Activated T-helper 2 cell treated with anti-CD3 and anti-CD28 coated beads, Interferon-gamma antibody, Interleukin-2, Interleukin-4, amounts not matched to agents 10 μg/mL and 5 μg/mL and 100 μg/mL, durations not matched to agents 14 hours and 24 hours and 36 hours (primary cell): ENCODE measurements at regions of chr16 and their contacts with region 1.

Region 1: GRCh38 chr16:66872943-66873684 is 7.2 kb upstream of the PDP2 start:
- DNase-seq: peak; percentile 93
- H3K4me3 Mint-ChIP-seq: peak overlapping the region; percentile 82
- H3K27ac Mint-ChIP-seq: peak overlapping the region; percentile 92
- H3K4me1 Mint-ChIP-seq: peaks cover 43% of the 10 kb centered on the region
- H3K27me3 Mint-ChIP-seq: no peaks in the 10 kb centered on the region

Region 2: DNA sequence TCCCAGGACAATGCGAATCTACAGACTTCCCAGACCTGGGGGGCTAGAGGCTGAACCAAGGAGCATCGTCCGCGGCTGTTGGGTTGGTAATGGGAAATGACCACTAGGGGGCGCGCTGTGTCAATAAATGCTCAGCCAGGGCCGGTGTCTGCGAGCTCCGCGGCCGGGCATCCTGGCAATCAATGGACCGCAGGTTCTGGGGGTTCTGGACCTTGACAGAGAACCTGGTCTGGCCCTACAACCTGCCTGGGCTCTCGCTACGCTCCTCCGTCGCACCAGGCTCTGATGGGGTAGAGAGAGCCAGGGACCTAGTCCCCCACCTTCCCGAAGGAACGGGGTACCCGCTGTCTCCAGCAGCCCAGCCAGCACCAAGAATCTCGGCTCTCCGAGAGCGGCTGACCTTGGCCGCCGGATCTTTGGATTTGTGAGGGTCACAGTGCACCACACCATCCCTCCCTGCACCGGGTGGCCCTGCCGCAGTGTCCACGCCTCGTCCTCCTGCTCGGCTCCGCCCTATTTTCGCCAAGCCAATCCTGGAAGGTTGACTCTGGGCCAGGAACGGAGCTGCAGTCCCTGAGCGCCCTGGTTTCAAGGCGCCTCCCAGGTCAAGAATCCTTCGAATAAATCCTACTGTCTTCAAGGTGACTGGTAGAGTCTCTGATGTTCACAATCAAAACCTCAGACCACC is 466.4 kb before region 1 on chr16:
- intact Hi-C with region 1: loop called (anchors 5 kb)
- DNase-seq: peak; percentile 78
- H3K4me3 Mint-ChIP-seq: peak overlapping the region; percentile 80
- H3K27ac Mint-ChIP-seq: peak overlapping the region; percentile 38
- H3K4me1 Mint-ChIP-seq: peaks cover 17% of the 10 kb centered on the region
- H3K27me3 Mint-ChIP-seq: peaks cover 14% of the 10 kb centered on the region

Region 3: GRCh38 chr16:66608241-66609138 is 264.6 kb before region 1 on chr16:
- intact Hi-C with region 1: loop called (anchors 5 kb)
- DNase-seq: peak; percentile 72
- H3K4me3 Mint-ChIP-seq: peak overlapping the region; percentile 57
- H3K27ac Mint-ChIP-seq: peak overlapping the region; percentile 68
- H3K4me1 Mint-ChIP-seq: peaks cover 27% of the 10 kb centered on the region
- H3K27me3 Mint-ChIP-seq: no peaks in the 10 kb centered on the region

Region 4: GRCh38 chr16:66740010-66740409 is 133.1 kb before region 1 on chr16:
- intact Hi-C with region 1: loop called (anchors 5 kb)
- DNase-seq: no peak
- H3K4me3 Mint-ChIP-seq: no peak overlapping the region
- H3K27ac Mint-ChIP-seq: no peak overlapping the region
- H3K4me1 Mint-ChIP-seq: peaks cover 13% of the 10 kb centered on the region
- H3K27me3 Mint-ChIP-seq: no peaks in the 10 kb centered on the region

Region 5: DNA sequence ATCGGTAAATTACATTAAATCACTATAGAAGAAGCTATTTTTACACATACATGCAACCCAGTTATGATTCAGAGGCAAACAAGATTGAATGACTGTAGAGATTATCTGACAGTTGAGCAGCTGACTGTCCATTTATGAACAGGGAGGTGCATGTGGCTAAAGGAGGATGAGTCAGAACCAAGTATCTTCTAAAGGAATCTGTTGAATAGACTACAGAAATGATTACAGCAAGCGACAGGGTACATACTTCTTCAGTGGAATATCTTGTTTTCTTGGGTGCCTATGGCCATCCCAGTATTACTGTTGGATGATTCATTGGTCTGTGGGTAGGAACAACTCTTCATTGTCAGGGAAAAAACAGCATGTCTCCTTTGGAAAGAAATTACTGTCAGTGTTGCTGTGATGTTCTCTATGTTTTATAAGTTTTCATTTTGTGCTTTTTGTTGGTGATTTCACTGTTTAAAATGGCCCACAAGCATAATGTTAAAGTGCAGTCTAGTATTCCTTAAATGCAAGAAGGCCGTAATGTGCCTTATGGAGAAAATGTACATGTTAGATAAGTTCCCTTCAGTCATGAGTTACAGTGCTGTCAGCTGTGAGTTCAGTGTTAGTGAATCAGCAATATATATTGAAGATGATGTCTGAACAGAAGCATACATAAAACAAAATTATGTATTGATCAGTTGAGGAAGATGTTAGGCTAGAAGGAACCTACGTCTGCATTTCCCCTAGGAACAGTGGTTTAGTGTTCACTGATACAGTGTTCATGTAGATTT is 182.8 kb after region 1 on chr16:
- intact Hi-C with region 1: loop called (anchors 10 kb)
- DNase-seq: no peak
- H3K4me3 Mint-ChIP-seq: peak overlapping the region; percentile 68
- H3K27ac Mint-ChIP-seq: peak overlapping the region; percentile 97
- H3K4me1 Mint-ChIP-seq: peaks cover 56% of the 10 kb centered on the region
- H3K27me3 Mint-ChIP-seq: no peaks in the 10 kb centered on the region